ENCODE measurements at regions of chr4 and their contacts with region 1.

Region 1: DNA sequence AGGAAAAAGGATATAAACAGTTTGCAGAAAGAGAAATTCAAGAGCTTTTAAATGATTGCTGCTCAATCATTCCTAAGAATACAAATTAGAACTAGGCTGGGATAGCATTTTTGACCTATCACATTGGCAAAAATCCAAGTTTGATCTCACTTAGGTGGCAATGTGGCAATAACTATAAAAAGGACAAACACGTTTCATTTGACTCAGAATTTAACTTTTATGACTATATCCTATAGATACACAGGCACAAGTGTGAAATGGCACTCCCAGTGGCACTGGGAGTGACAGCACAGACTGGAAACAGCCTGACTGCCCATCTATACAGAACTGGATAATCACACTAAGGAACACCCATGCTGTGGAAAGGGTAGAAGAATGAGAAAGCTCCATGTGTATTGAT is 11.1 kb downstream of the CENPU start:
- DNase-seq: no peak
- ATAC-seq: no peak
- H3K4me3 ChIP-seq: no peak overlapping the region
- H3K27ac ChIP-seq: no peak overlapping the region
- H3K4me1 ChIP-seq: peaks cover 0 to 5% (median 0%) of the 10 kb centered on the region in 12 donors
- H3K27me3 ChIP-seq: no peaks in the 10 kb centered on the region
- CTCF ChIP-seq: no peak
- POLR2A ChIP-seq: no peak

Region 2: GRCh38 chr4:184544788-184545409 is 177.9 kb before region 1 on chr4:
- intact Hi-C with region 1: loop called in 1 of 10 experiments (anchors 10 kb)
- DNase-seq: no peak
- ATAC-seq: peak in 1 of 4 donors; percentile 34
- H3K4me3 ChIP-seq: no peak overlapping the region
- H3K27ac ChIP-seq: no peak overlapping the region
- H3K4me1 ChIP-seq: peaks cover 0 to 4% (median 0%) of the 10 kb centered on the region in 12 donors
- H3K27me3 ChIP-seq: no peaks in the 10 kb centered on the region
- CTCF ChIP-seq: no peak
- POLR2A ChIP-seq: no peak

Region 3: DNA sequence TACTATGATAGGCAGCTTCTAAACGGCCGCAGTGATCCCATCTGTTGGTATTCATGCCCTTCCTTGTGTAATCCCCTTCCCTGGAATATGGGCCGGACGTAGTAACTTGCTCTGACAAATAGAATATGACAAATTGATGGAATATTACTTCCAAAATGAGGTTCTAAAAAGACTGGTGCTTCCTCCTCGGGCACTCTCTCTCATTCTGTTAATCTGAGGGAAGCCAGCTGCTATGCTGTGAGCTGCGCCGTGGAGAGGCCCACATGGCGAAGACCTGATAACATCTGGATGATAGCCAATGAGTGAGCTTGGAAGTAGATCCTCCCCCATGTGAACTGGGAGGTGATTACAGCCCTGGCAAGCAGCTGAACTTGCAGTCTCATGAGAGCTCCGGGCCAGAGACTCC is 393.0 kb after region 1 on chr4:
- intact Hi-C with region 1: no loop called
- DNase-seq: peak; percentile 74 to 91 (median 82)
- ATAC-seq: peak; percentile 90 to 93 (median 92)
- H3K4me3 ChIP-seq: no peak overlapping the region
- H3K27ac ChIP-seq: peak overlapping the region in 11 of 12 donors; percentile 61 to 88 (median 79)
- H3K4me1 ChIP-seq: peaks cover 5 to 61% (median 32%) of the 10 kb centered on the region in 12 donors
- H3K27me3 ChIP-seq: no peaks in the 10 kb centered on the region
- CTCF ChIP-seq: no peak
- POLR2A ChIP-seq: peak; percentile 36 to 85